ENCODE measurements at regions of chr10 and their contacts with region 1.

Region 1: GRCh38 chr10:96831867-96832720 is at the start of gene LCOR:
- DNase-seq: peak; percentile 56 to 96 (median 71)

Region 2: DNA sequence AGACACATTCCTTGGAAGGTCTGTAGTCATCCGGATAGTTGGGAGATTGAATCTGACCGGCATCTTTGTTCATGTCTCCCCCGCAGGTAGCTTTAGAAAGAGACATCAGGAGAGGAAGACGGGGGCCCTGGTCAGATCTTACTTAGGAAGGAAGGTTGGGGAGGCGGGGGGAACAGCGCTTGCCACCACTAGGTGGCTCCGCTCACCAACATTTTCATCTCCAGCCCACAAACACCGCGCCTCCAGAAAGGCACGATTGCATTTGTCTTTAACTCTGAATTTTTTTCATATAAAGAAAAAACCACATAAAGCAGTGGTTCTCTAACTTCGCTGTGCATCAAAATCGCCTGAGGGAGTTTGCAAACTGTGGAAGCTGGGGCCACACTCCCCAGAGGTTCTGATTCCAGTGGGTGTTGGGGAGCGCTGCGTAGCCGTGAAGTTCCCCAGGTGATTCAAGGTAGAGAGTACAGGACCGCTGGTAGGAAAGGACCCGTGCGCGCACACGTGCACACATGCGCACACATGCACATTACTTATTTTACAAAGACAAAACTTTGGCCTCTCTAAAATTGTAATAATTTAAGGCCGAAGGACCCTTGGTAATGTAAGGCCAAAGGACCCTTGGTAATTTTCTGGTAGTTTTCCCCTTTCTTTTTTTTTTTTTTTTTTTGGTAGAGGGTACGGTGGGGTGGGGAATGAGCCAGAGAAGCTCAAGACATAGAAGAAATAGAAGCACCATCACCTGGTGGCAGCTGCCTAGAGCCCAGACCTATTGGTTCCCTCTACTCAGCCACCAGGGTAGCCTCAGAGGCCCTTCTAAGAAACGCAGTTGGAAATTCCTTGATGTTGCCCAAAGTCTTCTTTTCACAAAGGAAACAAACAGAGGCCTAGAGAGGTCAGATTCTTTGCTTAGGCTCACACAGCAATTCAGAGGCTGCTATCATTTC is 435.9 kb before region 1 on chr10:
- intact Hi-C with region 1: loop called (anchors 5 kb)
- DNase-seq: peak; percentile 53 to 96 (median 74)

Region 3: GRCh38 chr10:96586419-96587263 is 245.5 kb before region 1 on chr10 and contains the start of gene TM9SF3:
- intact Hi-C with region 1: loop called (anchors 2 kb)
- DNase-seq: peak; percentile 82 to 98 (median 90)

Region 4: DNA sequence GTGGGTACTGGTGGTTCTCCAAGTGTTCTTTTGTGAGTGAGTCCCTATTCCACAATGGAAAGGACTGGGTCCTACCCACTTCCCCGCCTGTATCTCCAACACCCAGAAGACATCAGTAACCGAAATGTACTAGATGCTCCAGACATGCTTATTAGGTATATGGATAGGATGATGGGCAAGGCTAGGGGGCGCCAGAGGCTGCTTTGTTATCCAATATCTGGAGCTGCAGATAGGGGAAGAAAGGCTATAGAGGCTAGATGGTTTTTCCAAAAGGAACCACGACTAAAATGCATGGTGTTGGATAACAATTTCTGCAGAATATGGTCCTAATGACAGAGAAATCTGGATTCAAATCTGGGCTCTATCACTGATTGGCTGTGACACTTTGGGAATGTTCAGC is 189.1 kb before region 1 on chr10:
- intact Hi-C with region 1: loop called (anchors 5 kb)
- DNase-seq: peak in 7 of 10 donors; percentile 46 to 92 (median 60)

Region 5: DNA sequence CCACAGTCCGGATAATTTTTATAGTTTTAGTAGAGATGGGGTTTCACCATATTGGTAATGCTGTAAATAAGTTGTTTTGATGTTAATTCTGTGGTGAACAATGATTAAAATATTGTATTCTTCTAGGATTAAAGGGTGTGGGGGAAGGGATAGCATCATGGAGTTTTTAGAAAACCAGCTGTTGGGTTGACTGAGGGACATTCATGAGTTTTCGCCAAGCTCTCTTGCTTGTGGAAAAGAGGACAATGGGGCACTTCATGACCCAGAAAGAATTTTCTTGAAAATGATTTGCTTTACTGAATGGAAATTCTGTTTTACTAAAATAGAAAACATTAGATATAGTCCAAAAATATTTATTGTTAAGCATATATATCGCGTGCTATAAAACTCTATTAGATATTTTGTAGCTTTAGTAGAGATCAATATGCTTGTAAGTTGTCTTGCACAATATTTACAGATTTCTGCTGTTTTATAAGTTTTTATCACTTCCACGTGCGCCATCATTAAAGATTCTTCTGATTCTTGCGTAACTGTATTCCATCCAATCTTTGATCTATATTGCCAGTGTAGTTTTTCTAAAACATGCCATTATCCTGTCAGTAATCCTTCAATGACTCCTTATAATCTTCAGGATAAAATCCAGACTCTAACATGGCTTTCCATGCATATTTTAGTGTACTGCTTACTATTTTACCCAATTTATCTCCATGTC is 41.8 kb after region 1 on chr10:
- intact Hi-C with region 1: loop called (anchors 2 kb)
- DNase-seq: peak in 1 of 10 donors; percentile 30

Region 6: DNA sequence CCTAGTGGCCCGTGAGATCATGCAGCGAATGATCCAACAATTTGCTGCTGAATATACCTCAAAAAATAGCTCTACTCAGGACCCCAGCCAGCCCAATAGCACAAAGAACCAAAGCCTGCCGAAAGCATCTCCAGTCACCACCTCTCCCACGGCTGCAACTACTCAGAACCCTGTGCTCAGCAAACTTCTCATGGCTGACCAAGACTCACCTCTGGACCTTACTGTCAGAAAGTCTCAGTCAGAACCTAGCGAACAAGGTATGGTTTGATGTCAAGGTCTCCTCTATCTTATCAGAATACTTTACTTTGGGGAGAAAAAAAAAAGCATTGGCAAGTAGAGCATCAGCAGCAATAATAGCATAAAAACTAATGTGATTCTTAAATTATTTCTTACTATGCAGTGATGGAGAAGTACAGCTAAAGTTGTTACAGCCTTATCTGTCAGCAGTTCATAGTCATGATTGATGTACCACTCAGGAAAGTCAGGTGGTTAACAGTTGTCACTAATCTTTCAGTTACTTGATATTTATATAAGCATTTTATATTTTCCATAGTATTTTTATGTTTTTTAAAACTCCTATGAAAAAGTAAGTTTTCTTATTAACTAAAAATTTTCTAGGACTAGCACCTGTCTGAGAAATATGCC is 117.1 kb after region 1 on chr10:
- intact Hi-C with region 1: no loop called
- DNase-seq: peak in 1 of 10 donors; percentile 11

Region 7: GRCh38 chr10:97025613-97026242 is 193.6 kb after region 1 on chr10:
- intact Hi-C with region 1: loop called (anchors 1 kb)
- DNase-seq: peak in 6 of 10 donors; percentile 48 to 92 (median 70)

Region 8: GRCh38 chr10:97434055-97434454 is 602.0 kb after region 1 on chr10:
- intact Hi-C with region 1: no loop called
- DNase-seq: no peak

Measured in posterior cingulate gyrus (tissue), 11 donors.